Activated CD4-positive, alpha-beta T cell treated with anti-CD3 and anti-CD28 coated beads for 36 hours (primary cell): ENCODE measurements at regions of chr10 and their contacts with region 1.

Region 1: DNA sequence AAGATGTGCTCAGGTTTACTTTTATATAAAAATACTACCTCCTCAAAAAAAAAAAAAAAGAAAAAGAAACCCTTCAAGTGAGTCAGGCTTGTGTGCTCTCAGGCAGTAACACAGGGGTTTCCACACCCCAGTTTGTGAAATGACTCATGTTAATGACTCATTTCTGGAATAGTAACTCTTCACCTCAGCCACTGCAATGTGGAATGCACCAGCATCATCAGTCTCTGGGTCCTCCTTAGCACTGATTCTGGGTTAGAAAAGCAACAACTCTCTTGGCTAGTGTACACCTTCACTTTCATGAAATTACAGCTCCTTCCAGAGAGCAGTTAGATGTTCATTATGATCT is 110.6 kb downstream of the EMX2 start:
- DNase-seq: peak; percentile 61
- ATAC-seq: peak; percentile 95
- H3K4me3 Mint-ChIP-seq: no peak overlapping the region
- H3K27ac Mint-ChIP-seq: no peak overlapping the region
- H3K4me1 Mint-ChIP-seq: peaks cover 27% of the 10 kb centered on the region
- H3K27me3 Mint-ChIP-seq: peaks cover 34% of the 10 kb centered on the region

Region 2: GRCh38 chr10:117375360-117376178 is 277.6 kb before region 1 on chr10 and contains the start of gene PDZD8:
- CTCF ChIA-PET with region 1: no interaction called
- POLR2A ChIA-PET with region 1: no interaction called
- intact Hi-C with region 1: loop called (anchors 10 kb)
- DNase-seq: peak; percentile 94
- ATAC-seq: peak; percentile 85
- H3K4me3 Mint-ChIP-seq: peak within 1 kb of the TSS; percentile 92
- H3K27ac Mint-ChIP-seq: peak within 1 kb of the TSS; percentile 72
- H3K4me1 Mint-ChIP-seq: peaks cover 29% of the 10 kb centered on the region
- H3K27me3 Mint-ChIP-seq: peaks cover 15% of the 10 kb centered on the region
- total RNA-seq, gene PDZD8: 12.5 to 15.9 TPM

Region 3: GRCh38 chr10:117663750-117664149 is 10.6 kb after region 1 on chr10:
- CTCF ChIA-PET with region 1: interaction called, 6 read pairs
- POLR2A ChIA-PET with region 1: interaction called, 6 read pairs
- intact Hi-C with region 1: loop called in 1 of 2 experiments (anchors 1 kb)
- DNase-seq: peak; percentile 44
- ATAC-seq: peak; percentile 89
- H3K4me3 Mint-ChIP-seq: no peak overlapping the region
- H3K27ac Mint-ChIP-seq: no peak overlapping the region
- H3K4me1 Mint-ChIP-seq: peaks cover 2% of the 10 kb centered on the region
- H3K27me3 Mint-ChIP-seq: peaks cover 19% of the 10 kb centered on the region

Region 4: DNA sequence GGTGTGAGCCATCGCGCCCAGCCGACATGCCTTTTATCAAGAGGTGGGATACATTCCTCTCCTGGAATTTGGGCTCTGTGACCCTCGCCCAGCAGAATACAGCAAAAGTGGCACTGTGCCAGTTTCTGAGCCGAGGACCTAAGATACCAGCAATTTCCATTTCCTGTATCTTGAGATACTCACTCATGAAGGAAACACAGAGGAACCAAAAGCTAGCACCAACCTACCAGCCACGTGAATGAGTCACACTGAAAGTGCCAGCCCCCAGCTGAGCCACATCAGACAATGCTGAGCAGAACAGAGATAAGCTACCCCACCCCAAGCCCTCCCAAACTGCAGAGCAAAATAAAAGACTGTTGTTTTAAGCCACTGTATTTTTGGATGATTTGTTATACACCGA is 1045.3 kb after region 1 on chr10:
- CTCF ChIA-PET with region 1: no interaction called
- POLR2A ChIA-PET with region 1: no interaction called
- intact Hi-C with region 1: loop called in 1 of 2 experiments (anchors 10 kb)
- DNase-seq: peak; percentile 89
- ATAC-seq: peak; percentile 100
- H3K4me3 Mint-ChIP-seq: peak overlapping the region; percentile 16
- H3K27ac Mint-ChIP-seq: peak overlapping the region; percentile 18
- H3K4me1 Mint-ChIP-seq: peaks cover 58% of the 10 kb centered on the region
- H3K27me3 Mint-ChIP-seq: peaks cover 2% of the 10 kb centered on the region